BJ (cell line): ENCODE measurements at regions of chr5 and their contacts with region 1.

Region 1: DNA sequence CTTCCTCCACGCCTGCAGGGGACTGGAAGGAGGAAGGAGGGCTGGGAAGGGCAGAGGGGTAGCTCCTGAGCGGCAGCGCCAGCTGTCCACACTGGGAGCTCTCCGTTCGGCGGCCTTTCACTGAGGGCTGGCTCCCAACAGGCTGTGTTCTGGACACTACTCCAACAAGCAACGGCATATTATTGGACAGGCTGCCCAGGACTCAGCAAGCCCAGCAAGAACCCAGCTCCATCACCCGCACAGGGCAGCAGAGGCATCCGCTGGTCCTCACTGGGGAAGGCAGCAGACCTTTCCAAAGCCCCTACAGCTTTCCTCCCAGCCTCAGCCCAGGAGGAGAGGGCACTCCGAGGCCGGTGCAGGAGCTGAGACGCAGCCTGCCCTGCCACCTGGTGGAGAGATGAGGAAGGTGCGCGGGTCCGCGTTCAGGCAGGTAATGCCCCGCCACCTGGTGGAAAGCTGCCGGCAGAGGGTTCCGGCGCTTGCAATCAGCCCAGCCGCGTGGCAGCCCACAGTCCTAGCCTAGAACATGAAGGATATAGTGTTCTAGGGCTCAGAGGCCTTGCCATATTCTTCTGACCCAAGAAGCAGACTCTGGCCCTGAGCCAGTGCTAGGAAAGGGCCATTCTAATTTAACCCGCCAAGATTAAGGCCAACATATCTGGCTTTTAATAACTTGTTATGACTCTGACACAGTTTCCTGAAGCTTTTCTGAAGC is 74.4 kb downstream of the NRG2 start:
- DNase-seq: no peak
- H3K4me3 ChIP-seq: no peak overlapping the region
- H3K27me3 ChIP-seq: peaks cover 16% of the 10 kb centered on the region
- CTCF ChIP-seq: peak; percentile 99

Region 2: DNA sequence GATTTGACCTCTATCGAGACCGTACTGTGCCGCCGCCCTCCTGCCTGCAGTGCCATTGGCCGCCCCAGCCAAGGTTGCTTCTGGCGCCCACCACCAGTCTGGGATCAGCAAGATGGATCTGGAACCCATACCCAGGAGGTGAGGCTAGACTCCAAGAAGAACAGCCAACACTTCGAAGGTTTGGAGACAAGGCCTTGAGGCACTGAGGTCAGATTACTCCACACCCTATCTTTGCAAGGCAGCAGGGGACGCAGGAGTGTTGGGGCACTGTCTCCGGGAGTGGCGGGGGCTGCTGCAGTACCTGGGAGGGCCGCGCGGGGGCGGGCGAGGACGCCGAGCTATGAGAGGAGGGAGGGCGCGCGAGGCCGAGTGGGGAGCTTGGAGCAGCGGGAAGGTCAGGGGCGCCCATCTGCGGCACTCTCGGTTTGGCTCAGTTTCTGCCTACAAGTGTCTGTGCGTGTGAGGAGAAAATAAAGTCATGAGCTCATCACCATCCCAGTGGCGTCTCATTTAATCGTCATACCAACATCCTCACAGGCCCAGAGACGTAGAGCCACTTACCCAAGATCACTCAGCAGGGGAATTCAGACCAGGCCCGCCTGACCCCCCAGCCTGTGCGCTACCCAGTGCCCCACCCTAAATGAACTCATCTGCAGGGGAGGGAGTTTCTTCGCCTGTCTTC is 193.6 kb before region 1 on chr5:
- CTCF ChIA-PET with region 1: interaction called, 18 read pairs
- POLR2A ChIA-PET with region 1: no interaction called
- DNase-seq: no peak
- H3K4me3 ChIP-seq: no peak overlapping the region
- H3K27me3 ChIP-seq: peaks cover 13% of the 10 kb centered on the region
- CTCF ChIP-seq: peak; percentile 95

Region 3: DNA sequence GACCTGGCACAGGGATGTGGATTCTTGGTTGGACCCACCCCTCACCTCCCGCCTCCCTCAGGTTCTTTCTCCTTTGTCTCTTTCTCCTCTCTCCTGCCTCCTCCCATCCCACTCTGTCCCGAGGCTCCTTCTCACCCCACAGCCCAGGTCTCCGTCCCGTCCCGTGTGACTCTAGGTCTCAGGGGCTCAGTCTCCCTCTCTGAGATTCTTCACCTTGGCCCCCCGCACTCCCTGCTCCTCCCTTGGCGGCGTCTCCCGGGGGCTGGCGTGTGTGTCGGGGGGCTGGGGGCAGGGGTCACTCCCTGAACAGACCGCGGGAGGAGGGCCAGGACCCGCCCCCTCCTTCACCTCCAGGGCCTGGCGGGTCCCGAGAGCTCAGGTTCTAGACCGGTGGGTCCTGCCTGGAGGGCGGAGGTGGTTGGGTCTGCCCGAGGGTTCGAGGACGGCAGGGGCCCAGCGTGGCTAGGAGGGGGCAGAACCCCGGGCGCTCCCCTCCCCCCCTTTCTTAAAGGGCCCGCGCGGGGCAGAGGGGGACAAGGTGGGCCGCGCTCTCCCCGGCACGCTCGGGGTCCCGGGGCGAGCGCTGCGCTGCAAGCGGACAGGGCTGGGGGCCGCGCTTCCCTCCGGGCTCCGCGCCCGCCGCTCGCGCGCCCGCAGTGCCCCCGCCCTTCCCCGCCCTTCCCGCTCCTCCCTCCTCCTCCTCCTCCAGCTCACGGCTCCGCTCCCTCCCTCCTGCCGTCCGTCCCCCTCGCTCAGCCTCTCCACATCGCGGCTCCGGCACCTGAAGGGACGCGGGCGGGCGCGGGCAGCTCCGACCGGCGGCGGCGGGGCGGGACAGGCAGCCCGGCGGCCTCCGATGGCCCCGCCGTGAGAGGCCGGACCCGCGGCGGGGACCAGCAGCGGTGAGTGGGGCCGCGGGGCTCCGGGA is 173.4 kb before region 1 on chr5 and contains the start of gene PSD2:
- CTCF ChIA-PET with region 1: interaction called, 123 read pairs
- POLR2A ChIA-PET with region 1: no interaction called
- DNase-seq: no peak
- H3K4me3 ChIP-seq: peak within 1 kb of the TSS; percentile 23
- H3K27me3 ChIP-seq: peaks cover 51% of the 10 kb centered on the region
- CTCF ChIP-seq: no peak
- polyA plus RNA-seq, gene PSD2: 0.04 and 0.06 TPM in 2 replicates

Region 4: DNA sequence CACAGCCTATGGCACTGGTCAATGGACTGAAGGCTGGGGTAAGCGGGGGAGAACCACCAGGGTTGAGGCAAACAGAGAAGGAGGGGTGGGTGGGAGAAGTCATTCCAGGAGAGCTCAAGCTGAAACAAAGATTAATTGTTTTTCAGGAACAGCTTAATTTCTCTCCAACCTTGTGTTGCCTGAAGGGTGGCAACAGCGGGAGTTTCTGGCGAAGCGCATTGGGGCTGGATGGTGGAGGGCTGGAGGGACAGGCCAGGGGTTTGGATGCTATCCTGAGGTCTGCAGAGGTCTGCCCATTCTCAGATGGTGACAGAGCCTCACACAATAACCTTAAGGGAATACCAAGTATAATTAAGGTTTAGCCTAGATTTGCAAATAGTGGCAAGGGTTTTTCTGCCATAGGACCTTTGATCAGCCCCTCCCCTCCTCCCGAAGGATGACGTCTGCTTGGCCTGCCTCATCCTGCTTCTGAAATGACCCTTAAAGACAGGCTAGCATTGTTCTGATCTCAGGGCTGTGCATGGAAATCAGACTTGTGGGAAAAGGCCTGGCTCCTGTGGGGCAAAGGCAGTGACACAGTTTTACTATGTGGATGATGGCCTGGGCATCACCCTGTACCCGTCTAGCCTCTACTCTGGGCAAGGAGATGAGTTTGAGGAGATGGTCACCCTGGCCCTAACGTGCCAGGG is 140.4 kb before region 1 on chr5:
- CTCF ChIA-PET with region 1: no interaction called
- POLR2A ChIA-PET with region 1: no interaction called
- DNase-seq: no peak
- H3K4me3 ChIP-seq: no peak overlapping the region
- H3K27me3 ChIP-seq: peaks cover 5% of the 10 kb centered on the region
- CTCF ChIP-seq: no peak

Region 5: GRCh38 chr5:139955053-139955605 is 13.6 kb before region 1 on chr5:
- CTCF ChIA-PET with region 1: interaction called, 47 read pairs
- POLR2A ChIA-PET with region 1: no interaction called
- DNase-seq: no peak
- H3K4me3 ChIP-seq: no peak overlapping the region
- H3K27me3 ChIP-seq: peaks cover 25% of the 10 kb centered on the region
- CTCF ChIP-seq: no peak

Region 6: GRCh38 chr5:139985733-139986132 is 17.0 kb after region 1 on chr5:
- CTCF ChIA-PET with region 1: interaction called, 94 read pairs
- POLR2A ChIA-PET with region 1: no interaction called
- DNase-seq: peak; percentile 44
- H3K4me3 ChIP-seq: no peak overlapping the region
- H3K27me3 ChIP-seq: peaks cover 5% of the 10 kb centered on the region; the same call in 1 of the 2 replicates
- CTCF ChIP-seq: no peak

Region 7: DNA sequence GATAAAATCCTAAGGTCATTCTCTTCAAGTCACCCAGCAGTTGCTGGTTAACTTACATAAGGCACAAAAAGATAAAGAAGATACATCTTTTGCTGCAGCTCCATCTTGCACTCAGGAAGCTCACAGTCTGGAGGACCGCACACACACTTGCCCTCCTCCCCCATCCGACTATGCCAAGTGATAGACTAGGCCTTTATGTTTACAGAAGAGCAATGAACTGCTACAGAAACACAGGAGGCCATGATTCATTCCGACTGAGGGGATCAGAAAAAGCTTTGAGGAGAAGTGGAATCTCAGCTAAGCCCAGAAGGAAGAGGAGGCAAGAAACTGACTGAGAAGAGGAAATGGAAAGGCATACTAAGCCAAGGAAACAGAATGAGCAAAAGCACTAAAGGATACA is 57.0 kb after region 1 on chr5:
- CTCF ChIA-PET with region 1: interaction called, 10 read pairs
- POLR2A ChIA-PET with region 1: no interaction called
- DNase-seq: no peak
- H3K4me3 ChIP-seq: no peak overlapping the region
- H3K27me3 ChIP-seq: peaks cover 28% of the 10 kb centered on the region
- CTCF ChIP-seq: no peak